CD14-positive monocyte (primary cell): ENCODE measurements at regions of chr12 and their contacts with region 1.

Region 1: DNA sequence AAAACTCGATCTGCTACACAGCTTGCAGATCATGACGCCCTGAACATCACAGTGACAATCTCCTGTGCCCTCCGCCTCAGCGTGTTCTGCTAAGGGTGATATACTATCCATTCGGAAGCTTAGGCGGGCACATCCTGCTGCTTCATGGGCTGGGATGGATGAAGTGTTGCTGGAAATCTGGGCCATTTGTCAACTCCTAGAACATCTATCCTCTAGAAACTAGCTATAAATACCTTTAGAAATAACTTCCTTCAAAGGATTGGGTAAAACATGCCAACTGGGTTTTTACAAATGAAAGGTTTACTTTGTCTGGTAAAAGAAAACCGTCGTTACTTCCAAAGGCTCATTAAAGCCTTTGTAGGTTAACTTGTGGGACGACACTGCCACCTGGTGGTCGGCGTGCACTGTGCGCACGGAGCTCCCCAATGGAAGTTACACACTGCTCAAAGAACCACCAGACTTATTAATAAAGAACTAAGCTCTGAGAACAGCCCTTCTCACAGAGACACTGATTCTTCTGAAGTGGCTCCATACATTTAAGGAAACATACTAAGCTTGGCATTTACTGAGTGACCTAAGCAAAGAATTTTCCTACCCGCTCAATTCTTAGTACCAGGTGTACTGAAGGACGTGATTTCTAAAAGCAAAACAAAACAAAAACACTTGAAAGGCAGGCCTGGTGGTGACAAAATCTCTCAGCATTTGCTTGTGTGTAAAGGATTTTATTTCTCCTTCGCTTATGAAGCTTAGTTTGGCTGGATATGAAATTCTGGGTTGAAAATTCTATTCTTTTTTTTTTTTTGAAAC is 21.6 kb upstream of the CACNA2D4 start:
- DNase-seq: peak; percentile 78 to 81 (median 78)
- H3K4me3 ChIP-seq: no peak overlapping the region
- H3K4me3 Mint-ChIP-seq: no peak overlapping the region
- H3K27ac ChIP-seq: no peak overlapping the region
- H3K27ac Mint-ChIP-seq: peak overlapping the region in 1 of 7 donors; percentile 46
- H3K4me1 ChIP-seq: peaks cover 3 to 4% of the 10 kb centered on the region in 2 donors
- H3K4me1 Mint-ChIP-seq: peaks cover 4% of the 10 kb centered on the region
- H3K27me3 ChIP-seq: no peaks in the 10 kb centered on the region
- H3K27me3 Mint-ChIP-seq: peaks cover 0 to 1% (median 0%) of the 10 kb centered on the region in 3 donors
- CTCF ChIP-seq: peak; percentile 89

Region 2: GRCh38 chr12:1650260-1650977 is 289.6 kb before region 1 on chr12:
- intact Hi-C with region 1: loop called (anchors 5 kb)
- DNase-seq: no peak
- H3K4me3 ChIP-seq: no peak overlapping the region
- H3K4me3 Mint-ChIP-seq: no peak overlapping the region
- H3K27ac ChIP-seq: no peak overlapping the region
- H3K27ac Mint-ChIP-seq: no peak overlapping the region
- H3K4me1 ChIP-seq: peaks cover 13 to 15% of the 10 kb centered on the region in 2 donors
- H3K4me1 Mint-ChIP-seq: peaks cover 28% of the 10 kb centered on the region
- H3K27me3 ChIP-seq: no peaks in the 10 kb centered on the region
- H3K27me3 Mint-ChIP-seq: peaks cover 0 to 3% (median under 1%) of the 10 kb centered on the region in 3 donors
- CTCF ChIP-seq: no peak

Region 3: GRCh38 chr12:2301531-2302461 is 361.8 kb after region 1 on chr12:
- intact Hi-C with region 1: no loop called
- DNase-seq: no peak
- H3K4me3 ChIP-seq: no peak overlapping the region
- H3K4me3 Mint-ChIP-seq: no peak overlapping the region
- H3K27ac ChIP-seq: no peak overlapping the region
- H3K27ac Mint-ChIP-seq: no peak overlapping the region
- H3K4me1 ChIP-seq: peaks cover 35 to 37% of the 10 kb centered on the region in 2 donors
- H3K4me1 Mint-ChIP-seq: peaks cover 36% of the 10 kb centered on the region
- H3K27me3 ChIP-seq: no peaks in the 10 kb centered on the region
- H3K27me3 Mint-ChIP-seq: peaks cover 0 to 3% (median 0%) of the 10 kb centered on the region in 3 donors
- CTCF ChIP-seq: no peak